ENCODE measurements at regions of chr13 and their contacts with region 1.

Region 1: DNA sequence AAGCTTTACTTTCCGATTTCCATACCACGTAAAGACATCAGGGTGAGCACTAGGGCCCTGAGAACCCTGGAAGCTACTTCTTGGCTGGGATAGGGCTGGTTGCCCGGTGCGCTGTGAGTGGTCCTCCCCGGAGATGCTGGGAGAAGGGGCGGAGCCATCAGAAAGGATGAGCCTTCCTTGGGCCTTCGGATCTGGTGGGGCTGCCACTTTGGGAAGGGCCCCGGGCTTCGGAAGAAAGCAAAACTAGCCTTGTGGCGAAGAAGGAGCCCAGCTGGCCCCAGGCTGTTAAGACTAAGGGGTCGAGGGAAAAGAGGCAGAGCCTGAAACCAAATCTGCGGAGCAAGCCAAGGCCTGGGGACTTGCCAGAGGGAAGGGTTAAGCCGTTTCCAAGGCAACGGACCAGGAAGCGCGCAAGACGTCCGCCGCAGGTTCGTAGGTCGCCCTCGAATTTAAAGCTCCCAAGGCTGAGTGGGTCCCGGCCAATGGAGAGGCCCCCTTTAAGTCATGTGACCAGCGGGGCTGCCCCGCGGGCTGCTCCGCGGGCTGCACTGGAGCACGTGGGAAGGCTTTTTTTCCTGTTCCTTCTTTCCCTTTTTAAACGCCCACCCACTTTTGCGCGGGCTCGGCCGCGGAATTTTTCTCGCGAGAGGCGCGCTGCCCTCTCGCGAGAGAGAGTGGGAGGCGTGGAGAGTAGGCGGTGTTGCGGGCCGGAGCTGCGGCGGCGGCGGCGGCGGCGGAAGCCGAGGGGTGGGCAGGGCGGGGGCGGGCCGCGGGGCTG is 426 bp upstream of the AKAP11 start:
- DNase-seq: peak; percentile 94
- ATAC-seq: peak; percentile 83
- H3K4me3 ChIP-seq: peak overlapping the region; percentile 90
- H3K27ac ChIP-seq: peak overlapping the region; percentile 77
- H3K4me1 ChIP-seq: peaks cover 12% of the 10 kb centered on the region
- H3K27me3 ChIP-seq: no peaks in the 10 kb centered on the region
- CTCF ChIP-seq: no peak
- EP300 ChIP-seq: peak in 1 of 2 experiments; percentile 65; a peak in 1 of 4 replicates
- POLR2A ChIP-seq: no peak
- RAD21 ChIP-seq: no peak

Region 2: GRCh38 chr13:42039946-42040729 is 231.4 kb before region 1 on chr13:
- CTCF ChIA-PET with region 1: no interaction called
- POLR2A ChIA-PET with region 1: interaction called, 5 read pairs
- RAD21 ChIA-PET with region 1: no interaction called
- SMC1A ChIA-PET with region 1: interaction called, 3 read pairs
- in situ Hi-C with region 1: no loop called
- intact Hi-C with region 1: loop called (anchors 10 kb)
- DNase-seq: peak; percentile 25
- ATAC-seq: peak; percentile 82
- H3K4me3 ChIP-seq: peak overlapping the region; percentile 88
- H3K27ac ChIP-seq: peak overlapping the region; percentile 76
- H3K4me1 ChIP-seq: no peaks in the 10 kb centered on the region; the same call in 1 of the 2 replicates
- H3K27me3 ChIP-seq: no peaks in the 10 kb centered on the region
- CTCF ChIP-seq: no peak
- EP300 ChIP-seq: no peak
- POLR2A ChIP-seq: peak; percentile 97
- RAD21 ChIP-seq: no peak

Region 3: DNA sequence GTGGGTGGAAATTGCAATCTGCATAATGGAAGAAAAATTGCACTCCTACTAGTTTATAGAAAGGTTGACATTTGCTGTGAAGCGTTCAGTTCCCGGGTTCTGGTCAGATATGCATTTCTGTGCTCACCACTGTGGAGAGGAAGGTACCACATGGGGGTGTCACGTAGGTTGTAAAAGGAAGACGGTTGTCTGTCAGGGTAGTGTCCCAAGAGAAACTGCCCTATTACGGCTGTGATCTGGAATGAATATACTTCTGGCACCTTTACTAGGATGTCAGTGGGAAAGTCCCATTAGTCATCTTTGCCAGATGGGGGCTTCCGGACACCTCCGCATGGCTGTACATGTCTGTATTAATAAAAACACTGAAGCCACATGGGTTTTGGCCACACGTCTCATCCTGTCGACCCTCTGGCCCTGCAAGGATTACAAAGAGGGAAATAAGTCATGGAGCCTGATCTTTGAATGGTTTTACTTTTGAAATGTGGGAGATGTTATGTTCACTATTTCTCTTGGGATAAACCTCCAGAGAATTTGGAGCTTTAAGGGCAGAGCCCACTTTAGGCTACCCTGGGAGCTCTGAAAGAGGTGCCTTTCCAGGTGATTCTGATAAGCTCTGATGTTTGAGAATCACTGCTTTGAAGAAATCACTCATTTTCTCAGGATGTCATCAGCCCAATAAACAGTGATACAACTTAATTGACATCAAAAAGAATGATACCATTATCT is 134.3 kb after region 1 on chr13:
- CTCF ChIA-PET with region 1: interaction called, 6 read pairs
- POLR2A ChIA-PET with region 1: interaction called, 3 read pairs
- RAD21 ChIA-PET with region 1: interaction called, 4 read pairs
- SMC1A ChIA-PET with region 1: interaction called, 4 read pairs
- in situ Hi-C with region 1: no loop called
- intact Hi-C with region 1: loop called (anchors 5 kb)
- DNase-seq: peak; percentile 97
- ATAC-seq: peak; percentile 90
- H3K4me3 ChIP-seq: peak overlapping the region; percentile 31; the same call in 1 of the 2 replicates
- H3K27ac ChIP-seq: peak overlapping the region; percentile 98
- H3K4me1 ChIP-seq: peaks cover 54% of the 10 kb centered on the region
- H3K27me3 ChIP-seq: no peaks in the 10 kb centered on the region
- CTCF ChIP-seq: 0 out of 6 replicates have a peak, but pooled peaks of 1 of the 3 experiments have one; percentile 5
- EP300 ChIP-seq: peak; percentile 86 to 97
- POLR2A ChIP-seq: peak; percentile 48; the same call in 1 of the 2 replicates
- RAD21 ChIP-seq: peak; percentile 45

Region 4: GRCh38 chr13:42548731-42549551 is 277.4 kb after region 1 on chr13:
- CTCF ChIA-PET with region 1: no interaction called
- POLR2A ChIA-PET with region 1: no interaction called
- RAD21 ChIA-PET with region 1: no interaction called
- SMC1A ChIA-PET with region 1: no interaction called
- in situ Hi-C with region 1: no loop called
- intact Hi-C with region 1: loop called (anchors 1 kb)
- DNase-seq: peak; percentile 98
- ATAC-seq: peak; percentile 97
- H3K4me3 ChIP-seq: peak overlapping the region; percentile 33
- H3K27ac ChIP-seq: peak overlapping the region; percentile 66
- H3K4me1 ChIP-seq: peaks cover 27% of the 10 kb centered on the region
- H3K27me3 ChIP-seq: no peaks in the 10 kb centered on the region
- CTCF ChIP-seq: no peak
- EP300 ChIP-seq: peak; percentile 99
- POLR2A ChIP-seq: 0 out of 2 replicates have a peak, but pooled peaks have one; percentile 19
- RAD21 ChIP-seq: peak; percentile 35; the same call in 1 of the 2 replicates

Region 5: GRCh38 chr13:43041369-43041921 is 769.9 kb after region 1 on chr13:
- CTCF ChIA-PET with region 1: no interaction called
- POLR2A ChIA-PET with region 1: no interaction called
- RAD21 ChIA-PET with region 1: no interaction called
- SMC1A ChIA-PET with region 1: no interaction called
- in situ Hi-C with region 1: no loop called
- intact Hi-C with region 1: loop called (anchors 10 kb)
- DNase-seq: no peak
- ATAC-seq: peak; percentile 65
- H3K4me3 ChIP-seq: no peak overlapping the region
- H3K27ac ChIP-seq: peak overlapping the region; percentile 41
- H3K4me1 ChIP-seq: peaks cover 48% of the 10 kb centered on the region
- H3K27me3 ChIP-seq: no peaks in the 10 kb centered on the region
- CTCF ChIP-seq: no peak
- EP300 ChIP-seq: no peak
- POLR2A ChIP-seq: no peak
- RAD21 ChIP-seq: no peak